ENCODE measurements at regions of chr17 and their contacts with region 1.

Region 1: GRCh38 chr17:44141717-44142285 is at the start of gene HROB:
- DNase-seq: peak; percentile 97
- ATAC-seq: peak; percentile 99
- H3K4me3 ChIP-seq: peak within 1 kb of the TSS; percentile 41 to 85 (median 76)
- H3K4me3 Mint-ChIP-seq: peak within 1 kb of the TSS; percentile 87
- H3K27ac ChIP-seq: peak within 1 kb of the TSS; percentile 57 to 84
- H3K27ac Mint-ChIP-seq: peak within 1 kb of the TSS; percentile 61
- H3K4me1 ChIP-seq: peaks cover 9 to 11% of the 10 kb centered on the region in 2 donors
- H3K4me1 Mint-ChIP-seq: peaks cover 8% of the 10 kb centered on the region
- H3K27me3 ChIP-seq: peaks cover 0 to 20% (median 3%) of the 10 kb centered on the region in 4 experiments
- H3K27me3 Mint-ChIP-seq: peaks cover 14% of the 10 kb centered on the region
- CTCF ChIP-seq: peak; percentile 84
- total RNA-seq, gene HROB: 2.7 and 3.2 TPM in 2 replicates

Region 2: GRCh38 chr17:44110823-44111633 is 30.8 kb before region 1 on chr17:
- CTCF ChIA-PET with region 1: no interaction called
- POLR2A ChIA-PET with region 1: no interaction called
- intact Hi-C with region 1: no loop called
- DNase-seq: peak; percentile 67
- ATAC-seq: peak; percentile 75
- H3K4me3 ChIP-seq: peak overlapping the region in 4 of 5 experiments; percentile 5 to 55 (median 16)
- H3K4me3 Mint-ChIP-seq: peak overlapping the region; percentile 56
- H3K27ac ChIP-seq: no peak overlapping the region
- H3K27ac Mint-ChIP-seq: peak overlapping the region; percentile 46
- H3K4me1 ChIP-seq: peaks cover 32 to 43% of the 10 kb centered on the region in 2 donors
- H3K4me1 Mint-ChIP-seq: peaks cover 44% of the 10 kb centered on the region
- H3K27me3 ChIP-seq: no peaks in the 10 kb centered on the region
- H3K27me3 Mint-ChIP-seq: no peaks in the 10 kb centered on the region
- CTCF ChIP-seq: no peak

Region 3: DNA sequence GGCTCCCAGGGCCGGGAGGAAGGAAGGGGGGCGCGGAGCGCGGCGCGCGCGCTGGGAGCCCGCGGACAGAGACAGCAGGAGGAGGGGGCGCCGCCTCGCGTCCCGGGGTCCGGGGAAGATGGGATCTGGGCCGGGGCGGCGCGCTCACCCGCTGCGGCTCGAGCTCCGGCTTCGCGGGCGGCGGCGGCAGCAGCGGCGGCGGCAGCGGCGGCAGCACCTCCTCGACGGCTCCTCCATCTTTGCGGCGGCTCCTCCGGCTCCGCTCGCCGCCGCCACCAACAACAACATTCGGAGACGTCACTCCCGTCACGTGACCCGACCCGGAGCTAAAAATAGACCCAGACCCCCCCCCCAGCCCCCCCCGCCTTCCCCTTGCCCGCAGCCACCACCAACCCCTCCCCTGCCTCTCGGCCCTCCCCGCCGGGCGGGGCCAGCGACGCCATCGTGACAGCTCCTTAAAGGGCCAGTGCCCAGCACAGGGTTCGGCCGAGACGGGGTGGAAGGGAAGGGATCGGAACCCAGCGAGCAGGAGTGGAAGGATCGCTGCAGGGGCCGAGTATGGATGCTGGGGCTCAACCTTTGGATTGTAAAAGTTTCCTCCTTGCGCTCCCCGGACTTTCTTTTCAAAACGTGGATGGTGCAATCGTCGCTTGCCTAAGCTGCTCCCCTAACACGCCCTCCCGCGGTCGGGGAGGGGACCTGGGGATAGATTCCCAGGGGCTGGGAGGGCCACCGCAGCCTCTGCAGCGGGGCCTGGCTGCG is 18.3 kb before region 1 on chr17 and contains the start of gene HDAC5:
- CTCF ChIA-PET with region 1: interaction called, 16 read pairs
- POLR2A ChIA-PET with region 1: interaction called, 3 read pairs
- intact Hi-C with region 1: loop called (anchors 1 kb)
- DNase-seq: peak; percentile 95
- ATAC-seq: peak; percentile 97
- H3K4me3 ChIP-seq: peak within 1 kb of the TSS; percentile 71 to 98 (median 85)
- H3K4me3 Mint-ChIP-seq: peak within 1 kb of the TSS; percentile 95
- H3K27ac ChIP-seq: peak within 1 kb of the TSS; percentile 43 to 90
- H3K27ac Mint-ChIP-seq: peak within 1 kb of the TSS; percentile 99
- H3K4me1 ChIP-seq: peaks cover 18 to 26% of the 10 kb centered on the region in 2 donors
- H3K4me1 Mint-ChIP-seq: peaks cover 45% of the 10 kb centered on the region
- H3K27me3 ChIP-seq: no peaks in the 10 kb centered on the region
- H3K27me3 Mint-ChIP-seq: no peaks in the 10 kb centered on the region
- CTCF ChIP-seq: peak; percentile 76
- total RNA-seq, gene HDAC5: 104 and 113 TPM in 2 replicates

Region 4: GRCh38 chr17:44199553-44200477 is 58.0 kb after region 1 on chr17 and contains the start of gene ATXN7L3:
- CTCF ChIA-PET with region 1: no interaction called
- POLR2A ChIA-PET with region 1: interaction called, 14 read pairs
- intact Hi-C with region 1: loop called (anchors 1 kb)
- DNase-seq: peak; percentile 100
- ATAC-seq: peak; percentile 81
- H3K4me3 ChIP-seq: peak within 1 kb of the TSS; percentile 66 to 83 (median 81)
- H3K4me3 Mint-ChIP-seq: peak within 1 kb of the TSS; percentile 88
- H3K27ac ChIP-seq: peak within 1 kb of the TSS; percentile 89 to 90
- H3K27ac Mint-ChIP-seq: peak within 1 kb of the TSS; percentile 95
- H3K4me1 ChIP-seq: peaks cover 30 to 43% of the 10 kb centered on the region in 2 donors
- H3K4me1 Mint-ChIP-seq: peaks cover 46% of the 10 kb centered on the region
- H3K27me3 ChIP-seq: no peaks in the 10 kb centered on the region
- H3K27me3 Mint-ChIP-seq: no peaks in the 10 kb centered on the region
- CTCF ChIP-seq: no peak
- total RNA-seq, gene ATXN7L3: 107 and 119 TPM in 2 replicates

Measured in B cell (primary cell).